ENCODE measurements at regions of chr12 and their contacts with region 1.

Region 1: GRCh38 chr12:133130038-133130807 is at the starts of genes ZNF10 and ZNF891:
- DNase-seq: peak; percentile 98
- ATAC-seq: peak; percentile 87 to 96 (median 87)
- H3K4me3 ChIP-seq: peak within 1 kb of the TSS; percentile 80
- H3K4me3 Mint-ChIP-seq: peak within 1 kb of the TSS; percentile 95
- H3K27ac ChIP-seq: peak within 1 kb of the TSS; percentile 99
- H3K27ac Mint-ChIP-seq: peak within 1 kb of the TSS; percentile 99 to 100
- H3K4me1 ChIP-seq: peaks cover 9% of the 10 kb centered on the region
- H3K4me1 Mint-ChIP-seq: peaks cover 20 to 24% of the 10 kb centered on the region in 2 donors
- H3K27me3 ChIP-seq: no peaks in the 10 kb centered on the region
- H3K27me3 Mint-ChIP-seq: no peaks in the 10 kb centered on the region
- CTCF ChIP-seq: no peak
- total RNA-seq, gene ZNF10: 12.9 to 27.9 (median 26.0) TPM
- total RNA-seq, gene ZNF891: 1.9 to 3.1 (median 2.3) TPM

Region 2: GRCh38 chr12:133181238-133181959 is 51.2 kb after region 1 on chr12 and contains the start of gene ZNF268:
- intact Hi-C with region 1: loop called (anchors 1 kb)
- DNase-seq: peak; percentile 90 to 93
- ATAC-seq: peak; percentile 96
- H3K4me3 ChIP-seq: peak within 1 kb of the TSS; percentile 71
- H3K4me3 Mint-ChIP-seq: peak within 1 kb of the TSS; percentile 96
- H3K27ac ChIP-seq: peak within 1 kb of the TSS; percentile 75
- H3K27ac Mint-ChIP-seq: peak within 1 kb of the TSS; percentile 92 to 96
- H3K4me1 ChIP-seq: peaks cover 9% of the 10 kb centered on the region
- H3K4me1 Mint-ChIP-seq: peaks cover 27 to 38% of the 10 kb centered on the region in 2 donors
- H3K27me3 ChIP-seq: no peaks in the 10 kb centered on the region
- H3K27me3 Mint-ChIP-seq: peaks cover 5 to 8% of the 10 kb centered on the region in 2 donors
- CTCF ChIP-seq: peak; percentile 72
- total RNA-seq, gene ZNF268: 12.7 to 17.5 (median 14.3) TPM